PC-3 (cell line): ENCODE measurements at regions of chr6 and their contacts with region 1.

Region 1: DNA sequence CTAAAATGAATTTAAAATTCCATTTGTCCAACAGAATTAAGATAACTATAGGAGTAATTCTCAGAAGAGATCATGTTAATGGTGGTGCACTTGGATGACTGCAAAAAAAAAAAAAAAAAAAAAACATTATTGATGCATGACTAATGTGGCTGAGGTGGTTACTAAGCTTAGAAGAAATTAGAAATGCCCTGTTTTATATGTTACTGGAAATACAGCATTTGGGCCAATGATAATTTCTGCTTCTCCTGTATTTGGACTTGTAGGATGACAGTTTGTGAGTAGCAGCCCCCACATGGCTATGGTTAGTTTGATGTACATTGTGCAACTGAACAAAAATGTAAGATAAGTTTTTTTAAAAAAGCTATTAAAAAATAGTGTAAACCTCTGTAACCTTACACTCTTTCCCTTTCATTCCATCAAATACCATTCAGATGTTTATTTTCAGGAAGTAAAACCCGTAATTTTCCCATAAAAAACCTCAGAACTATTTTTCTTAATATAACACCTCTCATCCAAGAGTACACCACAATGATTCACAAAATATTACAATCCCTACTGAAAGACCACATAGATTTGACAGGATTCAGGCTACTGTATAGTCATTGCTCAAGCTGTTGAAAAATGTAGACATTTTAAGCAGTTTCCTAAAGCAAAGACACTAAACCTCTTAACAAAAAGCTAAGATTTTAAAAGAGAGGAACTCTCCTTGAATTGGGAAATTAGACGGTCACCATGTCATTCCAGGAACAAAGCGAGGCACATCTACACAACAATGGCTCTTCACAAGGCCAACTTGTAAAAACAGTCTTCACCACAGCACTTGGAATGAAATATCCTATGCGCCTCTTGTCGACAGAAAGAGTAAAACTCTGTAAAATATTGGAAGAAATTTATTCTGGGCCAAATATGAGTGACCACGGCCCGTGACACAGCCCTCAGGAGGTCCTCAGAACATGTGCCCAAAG is 83.0 kb downstream of the WDR27 start:
- DNase-seq: peak; percentile 62
- ATAC-seq: peak; percentile 87
- H3K4me3 ChIP-seq: peak overlapping the region; percentile 27; the same call in 1 of the 2 replicates
- H3K27ac ChIP-seq: peak overlapping the region; percentile 67
- H3K4me1 ChIP-seq: peaks cover 28% of the 10 kb centered on the region
- H3K27me3 ChIP-seq: no peaks in the 10 kb centered on the region
- CTCF ChIP-seq: no peak

Region 2: GRCh38 chr6:169529931-169530751 is 88.7 kb before region 1 on chr6:
- CTCF ChIA-PET with region 1: no interaction called
- POLR2A ChIA-PET with region 1: no interaction called
- intact Hi-C with region 1: loop called (anchors 5 kb)
- DNase-seq: peak; percentile 61
- ATAC-seq: peak; percentile 77
- H3K4me3 ChIP-seq: no peak overlapping the region
- H3K27ac ChIP-seq: peak overlapping the region; percentile 20; the same call in 1 of the 2 replicates
- H3K4me1 ChIP-seq: peaks cover 18% of the 10 kb centered on the region
- H3K27me3 ChIP-seq: no peaks in the 10 kb centered on the region
- CTCF ChIP-seq: no peak

Region 3: GRCh38 chr6:169556758-169557548 is 61.9 kb before region 1 on chr6:
- CTCF ChIA-PET with region 1: no interaction called
- POLR2A ChIA-PET with region 1: no interaction called
- intact Hi-C with region 1: loop called (anchors 1 kb)
- DNase-seq: no peak
- ATAC-seq: no peak
- H3K4me3 ChIP-seq: no peak overlapping the region
- H3K27ac ChIP-seq: no peak overlapping the region
- H3K4me1 ChIP-seq: peaks cover 17% of the 10 kb centered on the region
- H3K27me3 ChIP-seq: no peaks in the 10 kb centered on the region
- CTCF ChIP-seq: no peak

Region 4: DNA sequence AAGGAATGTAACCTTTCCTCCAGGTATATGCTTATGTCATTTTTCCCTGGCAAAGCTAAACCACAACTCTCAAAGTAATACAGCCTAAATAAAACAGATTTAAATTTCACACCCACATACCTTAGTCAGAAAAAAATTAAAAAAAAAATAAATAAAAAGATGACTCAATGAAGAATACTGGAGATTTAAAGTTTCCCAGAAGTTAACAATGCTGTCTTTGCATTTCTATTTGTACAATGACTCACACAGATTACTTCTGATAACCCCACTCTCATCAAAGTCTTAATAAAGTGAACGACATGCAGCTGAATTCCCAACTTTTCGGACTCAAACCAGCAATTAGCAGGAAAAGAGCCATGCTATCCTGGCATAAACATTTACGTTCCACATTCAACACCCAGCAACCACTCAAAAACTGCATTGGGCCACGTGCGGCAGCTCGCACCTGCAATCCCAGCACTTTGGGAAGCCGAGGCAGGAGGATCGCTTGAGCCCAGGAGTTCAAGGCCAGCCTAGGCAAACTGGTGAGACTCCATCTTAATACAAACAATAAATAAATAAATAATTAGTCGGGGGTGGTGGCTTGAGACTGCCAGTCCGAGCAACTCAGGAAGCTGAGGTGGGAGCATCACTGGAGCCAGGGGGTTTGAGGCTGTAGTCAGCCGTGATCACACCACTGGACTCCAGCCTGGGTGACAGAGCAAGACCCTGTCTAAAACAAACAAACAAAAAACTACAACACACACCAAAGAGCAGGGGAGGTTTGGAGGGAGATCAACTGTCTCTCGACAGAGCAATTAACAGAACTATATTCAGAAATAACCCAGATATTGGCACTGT is 47.5 kb before region 1 on chr6:
- CTCF ChIA-PET with region 1: no interaction called
- POLR2A ChIA-PET with region 1: no interaction called
- intact Hi-C with region 1: loop called (anchors 1 kb)
- DNase-seq: peak; percentile 66
- ATAC-seq: peak; percentile 88
- H3K4me3 ChIP-seq: no peak overlapping the region
- H3K27ac ChIP-seq: peak overlapping the region; percentile 56
- H3K4me1 ChIP-seq: peaks cover 17% of the 10 kb centered on the region
- H3K27me3 ChIP-seq: no peaks in the 10 kb centered on the region
- CTCF ChIP-seq: no peak

Region 5: GRCh38 chr6:169604076-169604475 is 14.7 kb before region 1 on chr6:
- CTCF ChIA-PET with region 1: no interaction called
- POLR2A ChIA-PET with region 1: no interaction called
- intact Hi-C with region 1: no loop called
- DNase-seq: no peak
- ATAC-seq: no peak
- H3K4me3 ChIP-seq: no peak overlapping the region
- H3K27ac ChIP-seq: no peak overlapping the region
- H3K4me1 ChIP-seq: no peaks in the 10 kb centered on the region
- H3K27me3 ChIP-seq: no peaks in the 10 kb centered on the region
- CTCF ChIP-seq: no peak

Region 6: DNA sequence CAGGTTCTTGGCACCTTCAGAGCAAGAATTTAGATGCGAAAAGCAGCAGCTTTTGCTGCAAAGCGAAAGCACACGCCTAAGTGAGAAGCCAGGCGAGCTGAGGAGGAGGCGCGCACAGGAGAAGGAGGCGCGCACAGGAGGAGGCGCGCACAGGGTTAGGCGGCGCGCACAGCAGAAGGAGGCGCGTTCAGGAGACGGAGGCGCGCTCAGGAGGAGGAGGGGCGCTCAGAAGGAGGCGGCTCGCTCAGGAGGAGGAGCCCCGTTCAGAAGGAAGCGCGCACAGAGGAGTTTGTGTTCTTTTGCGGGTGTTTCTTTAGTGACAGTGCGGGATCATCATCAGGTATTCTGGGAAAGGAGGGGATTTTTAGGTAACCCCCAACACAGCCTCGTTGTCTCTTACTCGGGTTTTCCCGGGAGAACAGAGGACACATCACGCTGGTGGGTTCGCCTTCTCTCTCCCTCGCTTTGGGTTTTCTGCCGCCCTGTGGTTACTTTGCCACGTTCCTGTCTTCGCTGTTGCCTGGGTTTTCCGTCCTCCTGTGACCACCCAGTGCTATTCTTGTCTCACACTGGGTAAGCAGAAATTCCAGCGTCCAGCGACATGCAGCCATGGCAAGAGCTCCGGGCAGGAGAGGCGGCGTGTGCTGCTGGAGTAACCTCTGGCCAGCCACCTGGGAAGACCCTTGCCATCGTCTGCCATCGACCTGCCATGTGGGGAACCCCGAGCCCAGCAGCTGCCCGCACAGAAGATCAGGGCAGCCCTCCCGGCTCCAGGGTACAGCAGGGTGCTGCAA is 36.0 kb after region 1 on chr6:
- CTCF ChIA-PET with region 1: interaction called, 3 read pairs
- POLR2A ChIA-PET with region 1: interaction called, 3 read pairs
- intact Hi-C with region 1: loop called (anchors 1 kb)
- DNase-seq: peak; percentile 74
- ATAC-seq: peak; percentile 89
- H3K4me3 ChIP-seq: peak overlapping the region; percentile 79
- H3K27ac ChIP-seq: no peak overlapping the region
- H3K4me1 ChIP-seq: peaks cover 6% of the 10 kb centered on the region; the same call in 1 of the 2 replicates
- H3K27me3 ChIP-seq: no peaks in the 10 kb centered on the region
- CTCF ChIP-seq: peak; percentile 64

Region 7: DNA sequence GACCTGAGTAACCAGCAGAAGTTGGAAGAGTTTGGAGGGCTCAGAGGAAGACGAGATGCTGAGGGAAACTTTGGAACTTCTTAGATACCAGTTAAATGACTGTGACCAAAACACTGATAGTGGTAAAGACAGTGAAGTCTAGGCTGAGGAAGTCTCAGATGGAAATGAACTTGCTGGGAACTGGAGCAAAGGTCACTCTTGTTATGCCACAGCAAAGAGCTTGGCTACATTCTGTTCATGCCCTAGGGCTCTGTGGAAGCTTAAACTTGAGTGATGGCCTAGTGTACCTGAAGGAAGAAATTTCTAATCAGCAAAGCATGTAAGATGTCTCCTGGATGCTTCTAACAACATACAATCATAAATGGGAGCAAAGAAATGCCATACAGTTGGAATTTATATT is 58.3 kb after region 1 on chr6:
- CTCF ChIA-PET with region 1: no interaction called
- POLR2A ChIA-PET with region 1: no interaction called
- intact Hi-C with region 1: no loop called
- DNase-seq: no peak
- ATAC-seq: no peak
- H3K4me3 ChIP-seq: no peak overlapping the region
- H3K27ac ChIP-seq: no peak overlapping the region
- H3K4me1 ChIP-seq: no peaks in the 10 kb centered on the region
- H3K27me3 ChIP-seq: no peaks in the 10 kb centered on the region
- CTCF ChIP-seq: no peak